PC-9 (cell line): ENCODE measurements at regions of chr11 and their contacts with region 1.

Region 1: GRCh38 chr11:33329705-33330329 is 72.6 kb downstream of the HIPK3 start:
- DNase-seq: peak; percentile 27 to 42
- H3K4me3 ChIP-seq: no peak overlapping the region
- H3K27ac ChIP-seq: no peak overlapping the region
- H3K4me1 ChIP-seq: no peaks in the 10 kb centered on the region
- H3K27me3 ChIP-seq: no peaks in the 10 kb centered on the region
- CTCF ChIP-seq: peak; percentile 83

Region 2: DNA sequence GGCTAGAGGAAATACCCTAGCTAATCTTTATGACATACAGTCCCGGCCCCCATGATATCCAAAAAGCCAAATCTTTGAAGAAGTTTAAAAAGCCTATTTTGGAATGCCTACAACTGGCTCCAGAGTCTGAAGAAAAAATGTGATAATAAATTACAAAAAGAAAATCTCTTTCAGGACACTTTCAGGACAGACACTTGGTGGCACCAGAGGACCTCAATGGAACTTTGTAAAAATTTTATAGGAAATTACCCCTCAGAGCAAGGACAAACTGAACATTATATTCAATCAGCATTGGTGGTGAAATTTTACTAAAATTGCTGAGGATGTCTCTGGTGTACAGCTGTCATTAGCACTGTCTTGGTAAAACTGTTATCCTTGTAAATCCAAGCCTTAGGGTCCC is 616.3 kb before region 1 on chr11:
- CTCF ChIA-PET with region 1: no interaction called
- POLR2A ChIA-PET with region 1: no interaction called
- intact Hi-C with region 1: loop called (anchors 10 kb)
- DNase-seq: peak in 1 of 2 experiments; percentile 11
- H3K4me3 ChIP-seq: no peak overlapping the region
- H3K27ac ChIP-seq: no peak overlapping the region
- H3K4me1 ChIP-seq: peaks cover 4% of the 10 kb centered on the region
- H3K27me3 ChIP-seq: no peaks in the 10 kb centered on the region
- CTCF ChIP-seq: peak; percentile 80

Region 3: GRCh38 chr11:32960553-32961164 is 369.2 kb before region 1 on chr11:
- CTCF ChIA-PET with region 1: interaction called, 5 read pairs
- POLR2A ChIA-PET with region 1: no interaction called
- intact Hi-C with region 1: loop called (anchors 5 kb)
- DNase-seq: peak in 1 of 2 experiments; percentile 59
- H3K4me3 ChIP-seq: no peak overlapping the region
- H3K27ac ChIP-seq: no peak overlapping the region
- H3K4me1 ChIP-seq: no peaks in the 10 kb centered on the region
- H3K27me3 ChIP-seq: no peaks in the 10 kb centered on the region
- CTCF ChIP-seq: peak; percentile 90